ENCODE measurements at regions of chr11 and their contacts with region 1.

Region 1: DNA sequence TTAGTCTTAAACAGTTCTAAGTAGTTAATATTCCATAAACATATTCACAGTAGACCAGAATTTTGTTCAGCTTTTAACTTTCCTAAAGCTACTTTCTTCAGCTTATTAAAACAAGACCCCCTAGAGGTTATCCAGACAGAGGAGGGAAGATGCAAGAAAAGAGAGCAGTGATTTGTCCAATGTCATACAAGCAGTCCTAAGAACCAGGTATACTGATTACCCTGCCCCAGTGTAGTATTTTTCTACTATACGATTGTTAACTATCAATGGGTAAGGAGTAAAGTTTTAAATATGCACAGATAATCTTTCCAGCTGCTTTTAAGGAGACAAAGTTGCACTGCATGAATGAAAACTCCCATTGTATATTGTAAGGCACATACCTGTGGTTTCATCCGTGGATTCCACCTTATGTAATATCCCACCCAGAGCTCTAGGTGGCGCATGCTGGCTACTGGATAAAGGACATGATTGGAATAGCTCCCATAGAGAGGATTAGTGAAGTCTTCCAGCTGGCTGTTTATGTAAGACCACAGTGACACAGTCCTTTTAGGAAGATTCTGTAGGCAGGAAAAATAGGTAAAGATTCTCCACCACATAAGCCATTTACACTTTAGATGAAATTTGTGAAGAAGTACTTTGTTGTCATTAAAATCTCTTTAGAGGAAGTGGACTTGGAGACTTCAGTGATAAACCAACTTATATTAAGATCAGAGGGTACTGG is 45.6 kb downstream of the CEP57 start:
- DNase-seq: peak; percentile 58

Region 2: GRCh38 chr11:96389720-96390487 is 554.0 kb after region 1 on chr11 and contains the starts of genes CCDC82 and JRKL:
- intact Hi-C with region 1: loop called in 1 of 2 experiments (anchors 10 kb)
- DNase-seq: peak; percentile 98
- total RNA-seq, gene CCDC82: 28.5 to 41.1 TPM
- total RNA-seq, gene JRKL: 10.1 to 13.9 TPM

Measured in posterior vena cava (tissue), 2 donors.